ENCODE measurements at regions of chr7 and their contacts with region 1.

Region 1: DNA sequence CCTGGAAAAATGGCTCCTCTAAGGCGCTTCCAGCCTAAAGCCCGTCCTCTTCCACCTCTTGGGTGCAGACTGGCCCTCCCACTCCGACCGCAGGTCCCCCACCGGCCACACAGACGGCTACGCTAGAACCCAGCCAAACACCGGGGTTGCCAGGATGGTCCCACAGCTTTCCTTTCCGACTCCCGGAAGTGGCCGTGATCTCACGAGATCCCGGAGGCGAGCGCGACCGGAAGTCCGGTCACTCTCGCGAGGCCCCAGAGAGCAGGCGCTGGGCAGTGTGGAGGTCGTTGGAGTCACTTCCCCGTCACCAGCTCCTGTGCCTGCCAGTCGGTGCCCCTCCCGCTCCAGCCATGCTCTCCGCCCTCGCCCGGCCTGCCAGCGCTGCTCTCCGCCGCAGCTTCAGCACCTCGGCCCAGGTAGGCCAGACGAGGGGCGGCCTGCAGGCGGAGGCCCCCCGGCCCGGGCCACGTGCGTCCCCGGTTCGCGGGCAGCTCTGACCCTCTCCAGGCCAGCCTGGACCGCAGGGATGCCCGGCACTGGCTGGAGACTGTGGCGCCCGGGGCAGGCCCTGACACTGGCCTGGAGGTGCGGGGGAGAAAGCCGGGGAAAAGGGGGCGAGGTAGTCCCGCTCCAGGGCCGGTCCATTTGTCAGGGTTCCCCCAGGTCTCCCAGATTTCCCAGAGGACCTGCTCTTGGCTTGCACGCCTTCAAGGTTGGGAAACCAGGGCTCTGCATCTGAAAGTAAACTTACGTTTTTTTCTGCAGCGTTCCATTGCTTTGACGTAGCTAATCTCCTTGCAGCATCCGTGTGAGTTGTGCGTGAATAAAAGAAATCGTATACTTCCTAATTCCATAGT is at the starts of genes MDH2 and STYXL1:
- DNase-seq: peak; percentile 95
- ATAC-seq: peak; percentile 96
- H3K4me3 Mint-ChIP-seq: peak within 1 kb of the TSS; percentile 92
- H3K27ac Mint-ChIP-seq: peak within 1 kb of the TSS; percentile 97
- H3K4me1 Mint-ChIP-seq: peaks cover 43% of the 10 kb centered on the region
- H3K27me3 Mint-ChIP-seq: no peaks in the 10 kb centered on the region
- total RNA-seq, gene MDH2: 257 to 328 TPM
- total RNA-seq, gene STYXL1: 47.5 to 50.5 TPM

Region 2: DNA sequence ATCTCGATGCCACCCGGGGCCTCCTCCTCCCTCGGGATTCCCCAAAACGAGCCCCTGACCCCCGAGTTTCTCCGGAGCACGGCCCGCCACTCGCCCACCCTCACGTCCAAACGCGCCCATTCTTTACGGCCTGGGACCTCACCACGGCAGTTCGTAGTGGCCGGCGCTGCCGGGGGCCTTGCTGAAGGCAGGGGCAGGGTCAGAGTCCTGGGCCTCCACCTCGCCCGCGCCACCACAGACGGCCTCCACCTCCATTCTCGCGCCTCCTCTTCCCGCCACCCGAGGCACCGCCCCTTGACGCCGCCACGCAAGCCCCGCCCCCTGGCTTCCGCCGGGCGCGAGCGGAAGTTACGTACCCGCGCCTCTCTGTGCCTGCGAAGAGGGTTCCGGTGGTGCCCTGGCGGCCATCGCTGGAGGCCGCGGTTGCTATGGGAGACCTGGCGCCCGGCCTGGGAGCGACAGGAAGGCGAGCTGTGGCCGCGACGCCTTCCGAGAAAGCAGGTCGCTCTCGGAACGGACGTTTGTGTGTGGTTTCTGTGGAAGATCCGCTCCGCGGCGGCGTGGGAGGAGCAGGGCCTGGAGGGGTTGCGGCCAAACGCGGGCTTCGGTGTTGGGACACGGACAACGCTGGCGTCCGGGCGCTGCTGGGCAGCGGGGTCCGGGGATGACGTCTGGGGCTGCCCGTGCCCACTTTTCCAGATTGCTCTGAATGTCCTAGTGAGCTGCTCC is 1793.7 kb before region 1 on chr7 and contains the start of gene RFC2:
- CTCF ChIA-PET with region 1: no interaction called
- POLR2A ChIA-PET with region 1: no interaction called
- intact Hi-C with region 1: loop called in 1 of 2 experiments (anchors 5 kb)
- DNase-seq: peak; percentile 98
- ATAC-seq: peak; percentile 96
- H3K4me3 Mint-ChIP-seq: peak within 1 kb of the TSS; percentile 98
- H3K27ac Mint-ChIP-seq: peak within 1 kb of the TSS; percentile 96
- H3K4me1 Mint-ChIP-seq: peaks cover 18% of the 10 kb centered on the region
- H3K27me3 Mint-ChIP-seq: no peaks in the 10 kb centered on the region
- total RNA-seq, gene RFC2: 84.9 to 123 TPM

Region 3: DNA sequence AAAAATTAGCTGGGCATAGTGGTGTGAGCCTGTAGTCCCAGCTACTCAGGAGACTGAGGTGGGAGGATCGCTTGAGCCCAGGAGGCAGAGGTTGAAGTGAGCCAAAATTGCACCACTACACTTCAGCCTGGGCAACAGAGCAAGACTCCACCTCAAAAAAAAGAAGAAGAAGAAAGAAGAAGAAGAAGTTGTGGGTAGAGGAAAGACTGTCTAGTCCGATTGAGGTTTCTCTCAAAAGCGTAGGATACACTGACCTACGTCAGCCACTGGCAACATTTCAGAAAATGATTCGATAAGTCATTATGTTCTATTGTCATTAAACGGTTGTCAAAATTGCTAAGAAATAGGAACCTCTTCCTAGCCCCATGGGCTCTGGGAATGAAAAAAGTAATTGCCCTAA is 191.5 kb before region 1 on chr7:
- CTCF ChIA-PET with region 1: no interaction called
- POLR2A ChIA-PET with region 1: no interaction called
- intact Hi-C with region 1: no loop called
- DNase-seq: no peak
- ATAC-seq: no peak
- H3K4me3 Mint-ChIP-seq: no peak overlapping the region
- H3K27ac Mint-ChIP-seq: no peak overlapping the region
- H3K4me1 Mint-ChIP-seq: peaks cover 7% of the 10 kb centered on the region
- H3K27me3 Mint-ChIP-seq: peaks cover 2% of the 10 kb centered on the region

Region 4: DNA sequence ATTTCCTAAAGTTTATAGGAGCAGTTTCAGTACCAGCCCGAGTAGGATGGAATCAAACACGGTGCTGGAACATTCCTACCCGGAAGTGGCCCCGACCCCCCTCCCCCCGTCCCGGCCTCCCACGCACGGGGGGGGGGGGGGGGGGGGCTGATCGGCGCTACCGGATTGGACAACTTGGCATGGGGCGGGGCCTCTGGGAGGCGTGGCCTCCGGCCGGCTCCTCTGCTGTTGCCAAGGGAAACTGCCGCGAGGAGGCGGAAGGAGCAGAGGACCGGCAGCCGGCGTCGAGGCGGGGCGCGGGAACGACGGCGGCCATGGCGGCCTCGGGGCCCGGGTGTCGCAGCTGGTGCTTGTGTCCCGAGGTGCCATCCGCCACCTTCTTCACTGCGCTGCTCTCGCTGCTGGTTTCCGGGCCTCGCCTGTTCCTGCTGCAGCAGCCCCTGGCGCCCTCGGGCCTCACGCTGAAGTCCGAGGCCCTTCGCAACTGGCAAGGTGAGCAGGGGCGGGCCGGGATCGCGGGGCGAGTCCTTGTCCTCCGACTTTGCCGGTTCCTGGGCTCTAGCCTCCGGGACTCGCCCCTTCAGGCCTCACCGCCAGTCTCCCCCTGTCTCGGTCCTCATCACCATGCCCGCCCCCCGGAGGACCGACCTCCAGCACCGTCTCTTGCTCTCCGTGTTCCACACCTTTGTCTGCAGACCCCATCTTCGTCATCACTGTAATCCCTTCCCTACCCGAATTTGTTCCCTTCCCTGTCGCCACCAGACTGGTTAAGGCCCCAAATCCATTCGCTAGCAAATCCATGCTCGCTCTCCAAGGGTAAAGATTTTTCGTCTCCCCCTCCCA is 169.0 kb before region 1 on chr7 and contains the start of gene RHBDD2:
- CTCF ChIA-PET with region 1: no interaction called
- POLR2A ChIA-PET with region 1: no interaction called
- intact Hi-C with region 1: loop called in 1 of 2 experiments (anchors 1 kb)
- DNase-seq: peak; percentile 99
- ATAC-seq: peak; percentile 97
- H3K4me3 Mint-ChIP-seq: peak within 1 kb of the TSS; percentile 100
- H3K27ac Mint-ChIP-seq: peak within 1 kb of the TSS; percentile 97
- H3K4me1 Mint-ChIP-seq: peaks cover 34% of the 10 kb centered on the region
- H3K27me3 Mint-ChIP-seq: no peaks in the 10 kb centered on the region
- total RNA-seq, gene RHBDD2: 21.6 to 23.2 TPM

Region 5: DNA sequence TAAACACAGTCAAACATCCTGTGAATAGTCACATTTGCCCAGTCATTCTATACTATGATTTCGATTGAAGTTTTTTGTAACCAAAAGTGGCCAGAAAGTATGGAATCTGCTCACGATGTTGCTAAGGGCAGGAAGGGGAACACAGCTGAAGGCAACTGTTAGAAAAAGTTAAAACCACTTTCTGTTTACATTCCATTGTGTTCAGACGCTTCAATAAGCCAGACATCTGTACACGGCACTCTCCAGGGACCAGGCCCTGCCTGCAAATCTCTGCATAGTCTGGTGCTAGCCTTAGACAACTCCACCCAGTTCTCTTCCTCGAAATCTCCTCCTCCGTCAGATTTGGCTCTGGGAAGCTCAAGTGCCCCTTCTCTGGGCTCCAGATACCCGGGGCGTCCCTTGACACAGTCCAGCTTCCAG is 36.6 kb before region 1 on chr7:
- CTCF ChIA-PET with region 1: interaction called, 3 read pairs
- POLR2A ChIA-PET with region 1: no interaction called
- intact Hi-C with region 1: loop called in 1 of 2 experiments (anchors 2 kb)
- DNase-seq: no peak
- ATAC-seq: no peak
- H3K4me3 Mint-ChIP-seq: no peak overlapping the region
- H3K27ac Mint-ChIP-seq: no peak overlapping the region
- H3K4me1 Mint-ChIP-seq: peaks cover 34% of the 10 kb centered on the region
- H3K27me3 Mint-ChIP-seq: peaks cover 3% of the 10 kb centered on the region

Region 6: DNA sequence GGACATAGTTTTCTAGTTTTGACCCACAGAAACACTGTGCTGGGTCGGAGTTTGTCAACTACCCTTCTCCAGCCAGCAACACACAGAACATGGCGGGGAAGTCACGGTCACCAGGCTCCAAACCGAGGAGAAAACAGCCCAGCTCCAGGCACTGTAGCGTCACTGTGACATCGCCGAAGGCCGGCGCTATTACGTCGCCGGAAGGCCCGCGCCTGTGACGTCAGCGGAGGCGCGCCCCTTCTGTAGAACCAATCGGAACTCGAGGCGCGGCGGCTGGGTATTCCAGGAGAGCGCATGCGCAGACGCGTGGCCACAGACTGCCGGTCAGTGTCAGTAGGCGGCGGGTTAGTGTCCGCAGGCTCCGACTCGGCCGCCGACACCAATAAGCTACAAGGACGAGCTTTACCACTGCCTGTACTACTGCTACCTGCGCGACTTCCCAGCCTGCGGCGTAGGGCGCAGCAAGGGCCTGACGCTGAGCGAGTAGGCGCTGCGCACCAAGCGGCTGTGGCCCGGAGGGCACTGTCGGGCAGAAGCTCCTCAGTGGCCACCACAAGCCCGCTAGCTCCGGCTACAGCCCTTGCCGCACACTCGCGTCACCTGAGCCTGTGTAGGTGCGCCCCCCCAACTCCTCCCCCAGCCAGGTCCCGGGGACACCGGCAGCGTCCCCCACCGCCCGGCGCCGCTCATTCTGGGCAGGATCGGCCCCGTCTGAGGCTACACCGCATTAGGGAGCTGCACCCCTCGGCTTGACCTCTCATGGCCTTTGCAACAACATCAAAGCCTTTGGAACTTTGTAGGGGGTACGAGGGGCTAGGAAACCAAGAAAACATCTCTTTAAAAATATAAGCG is 118.6 kb after region 1 on chr7:
- CTCF ChIA-PET with region 1: interaction called, 3 read pairs
- POLR2A ChIA-PET with region 1: no interaction called
- intact Hi-C with region 1: loop called in 1 of 2 experiments (anchors 1 kb)
- DNase-seq: peak; percentile 97
- ATAC-seq: peak; percentile 90
- H3K4me3 Mint-ChIP-seq: peak overlapping the region; percentile 79
- H3K27ac Mint-ChIP-seq: peak overlapping the region; percentile 93
- H3K4me1 Mint-ChIP-seq: peaks cover 8% of the 10 kb centered on the region
- H3K27me3 Mint-ChIP-seq: no peaks in the 10 kb centered on the region

Region 7: GRCh38 chr7:76262683-76263402 is 214.8 kb after region 1 on chr7:
- CTCF ChIA-PET with region 1: no interaction called
- POLR2A ChIA-PET with region 1: no interaction called
- intact Hi-C with region 1: no loop called
- DNase-seq: peak; percentile 69
- ATAC-seq: peak; percentile 47
- H3K4me3 Mint-ChIP-seq: no peak overlapping the region
- H3K27ac Mint-ChIP-seq: no peak overlapping the region
- H3K4me1 Mint-ChIP-seq: peaks cover under 1% of the 10 kb centered on the region
- H3K27me3 Mint-ChIP-seq: peaks cover 28% of the 10 kb centered on the region